ENCODE measurements at regions of chr3 and their contacts with region 1.

Region 1: GRCh38 chr3:20336572-20336971 is 150.6 kb upstream of the SGO1 start:
- DNase-seq: no peak
- H3K4me3 ChIP-seq: no peak overlapping the region
- H3K4me3 Mint-ChIP-seq: no peak overlapping the region
- H3K27ac ChIP-seq: no peak overlapping the region
- H3K27ac Mint-ChIP-seq: no peak overlapping the region
- H3K4me1 ChIP-seq: no peaks in the 10 kb centered on the region
- H3K4me1 Mint-ChIP-seq: no peaks in the 10 kb centered on the region
- H3K27me3 ChIP-seq: no peaks in the 10 kb centered on the region
- H3K27me3 Mint-ChIP-seq: no peaks in the 10 kb centered on the region
- CTCF ChIP-seq: no peak

Region 2: DNA sequence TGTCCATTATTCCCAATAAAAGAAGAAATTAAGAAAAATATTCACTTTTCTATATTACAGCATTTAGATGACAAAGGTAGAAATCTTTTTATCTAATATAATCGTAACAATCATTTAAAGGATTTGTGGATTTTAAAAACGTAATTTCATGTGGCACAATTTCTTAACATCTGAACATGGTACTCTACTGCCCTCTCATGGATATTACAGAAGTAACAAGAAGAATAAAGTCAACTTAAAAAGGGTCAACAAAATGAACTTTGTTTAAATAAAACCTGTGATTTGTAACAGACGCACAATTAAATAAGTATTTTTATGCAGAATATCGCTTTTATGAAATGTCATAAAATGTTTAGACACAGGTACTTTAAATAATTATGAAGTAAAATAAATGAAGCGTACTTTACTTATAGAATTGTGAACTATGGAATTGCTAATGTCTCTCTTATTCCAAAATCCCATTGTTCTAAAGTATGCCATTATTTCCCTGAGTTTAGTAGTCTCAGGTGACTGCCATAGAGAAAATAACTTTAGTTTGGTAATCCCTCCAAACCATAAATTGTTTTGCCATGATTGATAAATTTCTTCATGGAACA is 1781.3 kb after region 1 on chr3:
- intact Hi-C with region 1: loop called (anchors 5 to 10 kb)
- DNase-seq: peak in 2 of 3 donors; percentile 1 to 8
- H3K4me3 ChIP-seq: no peak overlapping the region
- H3K4me3 Mint-ChIP-seq: no peak overlapping the region
- H3K27ac ChIP-seq: no peak overlapping the region
- H3K27ac Mint-ChIP-seq: no peak overlapping the region
- H3K4me1 ChIP-seq: no peaks in the 10 kb centered on the region
- H3K4me1 Mint-ChIP-seq: no peaks in the 10 kb centered on the region
- H3K27me3 ChIP-seq: no peaks in the 10 kb centered on the region
- H3K27me3 Mint-ChIP-seq: no peaks in the 10 kb centered on the region
- CTCF ChIP-seq: peak; percentile 64